Uterus (tissue), 4 donors: ENCODE measurements at regions of chr15 and their contacts with region 1.

Region 1: GRCh38 chr15:89177633-89178306 is 43.6 kb downstream of the RLBP1 start:
- DNase-seq: peak; percentile 64 to 70
- H3K4me3 ChIP-seq: no peak overlapping the region
- H3K27ac ChIP-seq: peak overlapping the region; percentile 20 to 24
- H3K4me1 ChIP-seq: no peaks in the 10 kb centered on the region
- H3K27me3 ChIP-seq: no peaks in the 10 kb centered on the region
- CTCF ChIP-seq: peak; percentile 79 to 92 (median 86)
- POLR2A ChIP-seq: no peak

Region 2: GRCh38 chr15:88166082-88166993 is 1011.4 kb before region 1 on chr15:
- intact Hi-C with region 1: no loop called
- DNase-seq: no peak
- H3K4me3 ChIP-seq: no peak overlapping the region
- H3K27ac ChIP-seq: no peak overlapping the region
- H3K4me1 ChIP-seq: no peaks in the 10 kb centered on the region
- H3K27me3 ChIP-seq: no peaks in the 10 kb centered on the region
- CTCF ChIP-seq: no peak
- POLR2A ChIP-seq: no peak

Region 3: DNA sequence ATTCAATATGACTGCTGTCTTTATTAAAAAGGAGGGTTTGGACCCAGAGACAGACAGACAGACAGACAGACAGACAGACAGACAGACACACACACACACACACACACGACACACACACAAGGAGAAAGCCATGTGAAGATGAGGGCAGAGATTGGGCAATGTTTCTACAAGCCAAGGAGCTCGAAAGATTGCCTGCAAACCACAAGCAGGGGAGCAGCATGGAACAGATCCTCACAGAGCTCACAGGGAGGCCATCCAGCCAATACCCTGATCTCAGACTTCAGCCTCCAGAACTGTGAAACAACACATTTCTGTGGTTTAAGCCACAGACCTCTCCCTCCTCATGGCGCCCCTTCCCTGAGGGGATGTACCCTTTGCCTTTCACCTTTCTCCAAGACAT is 125.3 kb before region 1 on chr15:
- intact Hi-C with region 1: loop called (anchors 2 kb)
- DNase-seq: no peak
- H3K4me3 ChIP-seq: no peak overlapping the region
- H3K27ac ChIP-seq: peak overlapping the region; percentile 54 to 74
- H3K4me1 ChIP-seq: no peaks in the 10 kb centered on the region
- H3K27me3 ChIP-seq: no peaks in the 10 kb centered on the region
- CTCF ChIP-seq: no peak
- POLR2A ChIP-seq: no peak

Region 4: GRCh38 chr15:89321521-89322410 is 144.0 kb after region 1 on chr15:
- intact Hi-C with region 1: no loop called
- DNase-seq: no peak
- H3K4me3 ChIP-seq: no peak overlapping the region
- H3K27ac ChIP-seq: no peak overlapping the region
- H3K4me1 ChIP-seq: no peaks in the 10 kb centered on the region
- H3K27me3 ChIP-seq: no peaks in the 10 kb centered on the region
- CTCF ChIP-seq: no peak
- POLR2A ChIP-seq: no peak